ENCODE measurements at regions of chr5 and their contacts with region 1.

Region 1: DNA sequence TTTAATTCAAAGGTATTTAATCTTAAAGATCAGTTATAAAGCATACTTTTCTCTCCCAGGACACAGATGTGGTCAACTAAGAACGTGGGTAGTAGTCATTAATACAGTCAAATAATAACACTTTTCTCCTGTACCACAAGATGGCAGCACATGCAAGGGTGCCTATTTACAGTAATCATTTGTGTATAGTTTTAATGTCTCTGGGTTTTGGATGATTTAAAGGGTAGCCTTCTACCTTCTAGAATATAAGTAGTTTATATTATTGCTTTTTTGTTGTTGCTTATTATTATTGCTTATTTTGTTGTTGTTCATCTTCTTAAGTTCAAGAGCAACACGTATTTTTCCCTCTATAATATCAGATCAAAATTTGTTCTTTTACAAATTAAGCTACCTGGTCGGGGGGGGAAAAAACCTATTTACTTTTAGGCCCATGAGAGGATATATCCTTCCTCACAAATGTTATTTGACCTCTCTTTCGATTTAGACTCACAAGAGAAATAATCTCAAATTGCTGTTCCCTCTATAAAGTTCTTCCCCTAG is 59.6 kb upstream of the SLC27A6 start:
- DNase-seq: peak; percentile 21
- H3K4me3 ChIP-seq: no peak overlapping the region
- H3K27ac ChIP-seq: no peak overlapping the region
- H3K27me3 ChIP-seq: no peaks in the 10 kb centered on the region
- CTCF ChIP-seq: peak; percentile 83

Region 2: DNA sequence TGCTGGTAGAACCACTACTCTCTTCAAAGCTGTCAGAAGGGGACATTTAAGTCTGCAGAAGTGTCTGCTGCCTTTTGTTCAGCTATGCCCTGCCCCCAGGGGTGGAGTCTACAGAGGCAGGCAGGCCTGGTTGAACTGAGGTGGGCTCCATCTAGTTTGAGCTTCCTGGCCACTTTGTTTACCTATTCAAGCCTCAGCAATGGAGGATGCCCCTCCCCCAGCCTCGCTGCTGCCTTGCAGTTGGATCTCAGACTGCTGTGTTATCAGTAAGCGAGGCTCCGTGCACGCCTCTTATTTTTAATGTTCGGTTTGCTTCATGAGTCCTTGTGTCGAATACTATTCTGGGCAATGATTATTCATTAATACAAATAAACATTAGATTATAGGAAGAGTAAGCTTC is 56.6 kb after region 1 on chr5:
- CTCF ChIA-PET with region 1: no interaction called
- POLR2A ChIA-PET with region 1: no interaction called
- DNase-seq: no peak
- H3K4me3 ChIP-seq: no peak overlapping the region
- H3K27ac ChIP-seq: no peak overlapping the region
- H3K27me3 ChIP-seq: peaks cover 2% of the 10 kb centered on the region
- CTCF ChIP-seq: no peak

Region 3: GRCh38 chr5:129094087-129094923 is 188.7 kb after region 1 on chr5 and contains the start of gene ISOC1:
- CTCF ChIA-PET with region 1: interaction called, 19 read pairs
- POLR2A ChIA-PET with region 1: no interaction called
- DNase-seq: peak; percentile 74
- H3K4me3 ChIP-seq: peak within 1 kb of the TSS; percentile 98
- H3K27ac ChIP-seq: peak within 1 kb of the TSS; percentile 71
- H3K27me3 ChIP-seq: peaks cover 5% of the 10 kb centered on the region
- CTCF ChIP-seq: no peak; the same call in 1 of the 2 replicates
- polyA plus RNA-seq, gene ISOC1: 22.7 and 28.0 TPM in 2 replicates

Region 4: DNA sequence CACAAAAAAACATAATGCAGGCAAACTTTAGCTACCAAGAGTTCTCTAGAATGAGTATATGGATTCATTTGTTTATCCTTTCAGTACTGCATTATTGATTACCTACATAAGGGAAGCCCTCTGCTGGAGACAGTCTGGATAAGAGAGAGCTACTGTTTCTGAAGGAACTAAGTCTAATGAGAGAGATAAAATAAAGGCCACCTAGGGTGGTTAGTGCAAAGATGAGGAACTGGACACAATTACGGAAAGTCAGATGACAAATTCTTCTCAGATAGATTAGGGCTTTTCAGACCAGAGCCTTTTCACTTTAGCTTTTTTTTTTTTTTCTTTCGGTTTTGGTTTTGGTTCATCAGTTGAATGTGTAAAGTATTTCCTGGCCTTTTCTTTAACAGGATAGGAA is 220.2 kb after region 1 on chr5:
- CTCF ChIA-PET with region 1: interaction called, 46 read pairs
- POLR2A ChIA-PET with region 1: no interaction called
- DNase-seq: no peak
- H3K4me3 ChIP-seq: no peak overlapping the region
- H3K27ac ChIP-seq: no peak overlapping the region
- H3K27me3 ChIP-seq: no peaks in the 10 kb centered on the region
- CTCF ChIP-seq: no peak

Measured in AG04450 (cell line).